A549 (cell line): ENCODE measurements at regions of chr22 and their contacts with region 1.

Region 1: GRCh38 chr22:40960145-40960544 is 9.0 kb downstream of the RBX1 start:
- DNase-seq: no peak
- ATAC-seq: no peak
- H3K4me3 ChIP-seq: no peak overlapping the region
- H3K27ac ChIP-seq: no peak overlapping the region
- H3K4me1 ChIP-seq: no peaks in the 10 kb centered on the region
- CTCF ChIP-seq: no peak
- EP300 ChIP-seq: no peak
- POLR2A ChIP-seq: no peak
- RAD21 ChIP-seq: no peak

Region 2: DNA sequence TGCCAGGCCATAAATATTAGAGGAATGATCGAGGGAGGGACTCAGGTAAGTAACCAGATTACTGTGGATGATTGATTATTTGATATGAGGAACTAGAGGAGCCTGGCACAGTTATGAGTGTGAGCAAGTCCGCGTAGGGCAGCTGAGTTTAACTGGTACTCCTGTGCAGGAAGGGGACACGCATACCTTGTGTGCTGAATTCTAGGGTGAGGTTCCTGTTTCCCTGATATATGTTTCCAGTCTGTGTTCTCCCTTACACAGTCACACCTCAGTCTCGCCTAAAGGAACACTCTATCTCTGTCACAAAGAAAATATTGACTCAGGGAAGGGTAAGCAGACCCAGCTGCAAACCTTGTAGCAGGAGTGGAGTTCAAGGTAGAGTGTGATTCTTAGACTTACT is 572.4 kb before region 1 on chr22:
- CTCF ChIA-PET with region 1: no interaction called
- POLR2A ChIA-PET with region 1: interaction called, 12 read pairs
- DNase-seq: no peak
- ATAC-seq: peak in 1 of 2 experiments; percentile 35; a peak in 2 of 6 replicates
- H3K4me3 ChIP-seq: no peak overlapping the region
- H3K27ac ChIP-seq: no peak overlapping the region
- H3K4me1 ChIP-seq: no peaks in the 10 kb centered on the region
- CTCF ChIP-seq: no peak
- EP300 ChIP-seq: no peak
- POLR2A ChIP-seq: no peak
- RAD21 ChIP-seq: no peak

Region 3: GRCh38 chr22:40939202-40939601 is 20.9 kb before region 1 on chr22:
- CTCF ChIA-PET with region 1: no interaction called
- POLR2A ChIA-PET with region 1: interaction called, 15 read pairs
- DNase-seq: no peak
- ATAC-seq: no peak
- H3K4me3 ChIP-seq: no peak overlapping the region
- H3K27ac ChIP-seq: no peak overlapping the region
- H3K4me1 ChIP-seq: no peaks in the 10 kb centered on the region
- CTCF ChIP-seq: no peak
- EP300 ChIP-seq: no peak
- POLR2A ChIP-seq: no peak
- RAD21 ChIP-seq: no peak

Region 4: DNA sequence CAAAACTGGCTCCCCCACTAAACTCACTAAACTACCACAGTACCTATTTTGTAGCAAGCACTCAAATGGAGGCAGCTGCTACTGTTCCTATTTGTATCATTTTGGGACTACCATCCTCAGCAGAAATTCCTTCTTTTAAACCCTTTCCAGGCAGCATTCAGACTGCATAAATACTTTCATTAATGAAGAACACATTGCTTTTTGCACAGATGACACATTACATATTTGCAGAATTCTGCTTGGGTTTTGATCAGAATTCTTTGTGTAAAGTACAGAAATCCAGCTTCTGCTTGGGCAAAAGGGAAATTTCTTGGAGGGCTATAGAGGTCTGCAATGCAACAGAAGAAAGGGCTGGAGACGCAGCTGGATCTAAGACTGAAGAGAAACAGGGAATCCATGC is 15.2 kb after region 1 on chr22:
- CTCF ChIA-PET with region 1: no interaction called
- POLR2A ChIA-PET with region 1: no interaction called
- DNase-seq: no peak
- ATAC-seq: no peak
- H3K4me3 ChIP-seq: no peak overlapping the region
- H3K27ac ChIP-seq: no peak overlapping the region
- H3K4me1 ChIP-seq: no peaks in the 10 kb centered on the region
- CTCF ChIP-seq: no peak
- EP300 ChIP-seq: no peak
- POLR2A ChIP-seq: no peak
- RAD21 ChIP-seq: no peak